IMR-90 (cell line): ENCODE measurements at regions of chr20 and their contacts with region 1.

Region 1: DNA sequence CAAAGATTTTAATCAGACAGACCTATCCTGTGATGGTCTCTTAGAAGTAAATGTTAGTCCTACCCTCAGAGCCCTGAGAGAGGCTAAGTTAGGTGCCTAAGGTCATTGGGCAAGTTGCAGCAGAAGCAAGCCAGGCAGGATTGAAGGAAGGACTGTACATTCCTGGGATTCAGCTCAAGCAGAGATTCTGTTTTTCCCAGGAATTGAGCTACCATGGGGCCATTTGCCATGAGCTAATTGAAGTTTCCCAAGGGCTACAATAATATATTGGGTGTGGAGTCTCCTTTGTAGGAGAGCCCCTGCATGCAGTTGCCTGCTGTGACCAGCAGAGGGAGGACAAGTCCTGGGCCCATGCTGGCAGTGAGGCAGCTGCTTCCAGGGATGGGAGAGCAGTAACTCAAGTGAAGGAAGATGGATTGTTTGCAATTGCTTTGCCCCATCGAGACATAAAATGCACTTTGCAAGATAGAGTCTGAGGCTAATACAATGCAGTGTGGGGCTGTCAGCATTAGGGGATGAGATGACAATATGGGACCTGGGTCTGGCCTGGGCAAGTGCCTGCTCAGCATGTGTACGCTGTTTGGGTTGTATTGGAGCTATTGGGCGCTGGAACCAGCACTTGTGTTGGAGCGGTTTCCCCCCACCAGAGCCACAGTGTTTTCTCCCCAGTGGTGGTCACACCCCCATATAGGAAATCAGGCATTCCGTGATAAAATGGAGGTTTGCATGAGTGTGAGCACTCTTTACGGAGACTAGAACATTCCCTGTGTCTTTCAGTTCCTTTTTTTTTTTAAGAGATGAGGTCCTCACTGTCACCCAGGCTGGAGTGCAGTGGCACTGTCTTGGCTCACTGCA is 27.9 kb downstream of the DNMT3B start:
- DNase-seq: peak; percentile 69
- ATAC-seq: peak; percentile 99
- H3K4me3 ChIP-seq: no peak overlapping the region
- H3K27ac ChIP-seq: no peak overlapping the region
- H3K4me1 ChIP-seq: peaks cover 2% of the 10 kb centered on the region; the same call in 1 of the 2 replicates
- H3K27me3 ChIP-seq: no peaks in the 10 kb centered on the region
- CTCF ChIP-seq: peak; percentile 97
- POLR2A ChIP-seq: no peak
- RAD21 ChIP-seq: peak; percentile 94

Region 2: DNA sequence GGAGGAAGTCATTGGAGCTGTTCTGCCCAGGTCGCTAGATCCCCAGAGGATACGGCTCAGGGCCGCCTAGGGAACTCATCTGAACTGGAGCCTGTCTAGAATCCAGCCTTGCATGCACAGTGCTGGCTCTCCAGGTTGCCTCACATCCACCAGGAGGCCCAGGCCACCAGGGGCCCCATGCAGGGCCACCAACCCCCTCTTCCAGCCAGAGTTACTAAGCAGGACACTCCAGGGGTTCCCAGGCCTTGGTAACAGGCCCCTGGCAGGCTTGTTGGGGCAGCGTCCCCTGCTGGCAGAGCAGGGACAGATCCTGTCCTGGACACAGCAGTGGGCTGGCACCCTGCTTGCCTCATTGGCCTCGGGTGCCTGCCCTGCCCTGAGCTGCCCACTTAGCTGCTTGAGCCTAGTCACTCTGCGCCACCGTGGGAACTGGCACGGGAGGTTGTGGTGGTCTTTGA is 103.9 kb after region 1 on chr20:
- CTCF ChIA-PET with region 1: no interaction called
- POLR2A ChIA-PET with region 1: interaction called, 5 read pairs
- dilution Hi-C with region 1: no loop called
- in situ Hi-C with region 1: no loop called
- intact Hi-C with region 1: loop called (anchors 1 kb)
- DNase-seq: peak; percentile 16
- ATAC-seq: peak; percentile 58
- H3K4me3 ChIP-seq: no peak overlapping the region
- H3K27ac ChIP-seq: no peak overlapping the region
- H3K4me1 ChIP-seq: no peaks in the 10 kb centered on the region
- H3K27me3 ChIP-seq: peaks cover 3% of the 10 kb centered on the region; the same call in 1 of the 2 replicates
- CTCF ChIP-seq: peak; percentile 50
- POLR2A ChIP-seq: no peak
- RAD21 ChIP-seq: peak; percentile 50

Region 3: GRCh38 chr20:32945710-32946221 is 155.6 kb after region 1 on chr20:
- CTCF ChIA-PET with region 1: interaction called, 5 read pairs
- POLR2A ChIA-PET with region 1: no interaction called
- dilution Hi-C with region 1: no loop called
- in situ Hi-C with region 1: loop called (anchors 10 kb)
- intact Hi-C with region 1: loop called (anchors 1 kb)
- DNase-seq: peak; percentile 34
- ATAC-seq: peak; percentile 86
- H3K4me3 ChIP-seq: no peak overlapping the region
- H3K27ac ChIP-seq: no peak overlapping the region
- H3K4me1 ChIP-seq: no peaks in the 10 kb centered on the region
- H3K27me3 ChIP-seq: peaks cover 10% of the 10 kb centered on the region
- CTCF ChIP-seq: peak; percentile 50
- POLR2A ChIP-seq: no peak
- RAD21 ChIP-seq: peak; percentile 51

Region 4: DNA sequence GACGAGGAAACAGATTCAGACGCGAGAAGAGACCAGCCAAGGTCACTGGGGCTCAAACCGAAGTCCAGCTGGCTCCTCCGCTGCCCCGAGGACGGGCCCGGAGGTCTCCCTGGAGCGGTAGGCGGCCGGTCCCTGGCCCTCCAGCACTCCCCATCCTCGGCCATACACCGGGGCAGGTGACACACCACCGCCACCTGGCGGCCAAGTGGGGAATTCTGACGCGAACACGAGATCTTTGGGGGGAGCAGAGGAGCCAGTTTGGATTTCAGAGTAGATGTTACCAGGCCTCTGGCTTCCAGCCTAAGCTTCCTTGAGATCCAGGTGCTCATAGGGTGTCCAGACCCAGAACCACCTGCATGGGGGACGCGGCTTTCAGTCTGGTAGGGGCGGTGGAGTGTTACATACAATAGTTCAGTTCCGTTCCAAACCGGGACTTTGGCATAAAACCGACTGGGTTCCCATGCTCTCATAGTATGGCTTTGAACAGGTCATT is 509.0 kb after region 1 on chr20:
- CTCF ChIA-PET with region 1: no interaction called
- POLR2A ChIA-PET with region 1: no interaction called
- dilution Hi-C with region 1: no loop called
- in situ Hi-C with region 1: no loop called
- intact Hi-C with region 1: loop called (anchors 2 kb)
- DNase-seq: peak; percentile 23
- ATAC-seq: peak; percentile 90
- H3K4me3 ChIP-seq: no peak overlapping the region
- H3K27ac ChIP-seq: no peak overlapping the region
- H3K4me1 ChIP-seq: no peaks in the 10 kb centered on the region
- H3K27me3 ChIP-seq: peaks cover 39% of the 10 kb centered on the region
- CTCF ChIP-seq: peak; percentile 74
- POLR2A ChIP-seq: no peak
- RAD21 ChIP-seq: peak; percentile 60